CD14-positive monocyte (primary cell): ENCODE measurements at regions of chr7 and their contacts with region 1.

Region 1: DNA sequence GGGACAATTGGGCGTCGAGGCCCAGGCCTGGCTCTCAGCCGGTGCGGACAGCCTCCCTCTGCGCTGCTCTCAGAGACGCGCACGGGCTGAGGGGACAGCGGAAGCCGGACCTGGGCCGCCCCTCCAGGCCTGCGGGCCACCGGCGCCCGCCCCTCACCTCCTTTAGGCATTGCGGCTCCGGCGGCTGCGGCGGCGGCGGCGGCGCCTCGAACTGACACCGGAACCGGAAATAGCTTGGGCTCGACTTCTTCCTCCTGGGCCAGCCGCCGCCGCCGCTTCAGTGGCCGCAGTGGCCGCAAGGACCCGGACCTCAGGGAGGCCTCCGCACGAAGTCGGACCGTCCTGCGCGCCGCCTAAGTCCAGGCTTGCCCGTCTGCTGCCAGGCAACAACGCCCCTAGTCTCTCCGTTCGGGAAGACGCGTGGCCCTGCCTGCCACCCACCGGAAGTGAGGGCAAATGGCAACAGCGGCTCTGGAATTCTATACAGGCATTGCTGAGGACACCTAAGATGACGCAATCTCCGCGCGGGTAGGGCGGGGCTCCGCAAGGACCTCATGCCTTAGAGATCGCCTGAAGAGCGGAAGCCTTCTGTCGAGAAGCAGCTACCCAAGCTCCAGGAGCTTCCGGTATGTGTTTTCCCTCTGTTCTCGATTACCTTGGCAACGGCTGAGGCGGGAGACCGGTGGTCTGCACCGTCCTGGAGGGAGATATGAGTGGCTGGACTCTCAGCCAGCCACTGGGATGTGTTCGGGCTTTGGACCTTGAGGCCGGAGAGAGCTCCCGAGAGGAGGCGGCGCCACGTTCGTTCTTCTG is at the starts of genes BUD31 and PDAP1:
- DNase-seq: peak; percentile 93 to 96 (median 94)
- H3K4me3 ChIP-seq: peak within 1 kb of the TSS; percentile 65 to 96 (median 93)
- H3K4me3 Mint-ChIP-seq: peak within 1 kb of the TSS; percentile 97 to 99
- H3K27ac ChIP-seq: peak within 1 kb of the TSS; percentile 95 to 97
- H3K27ac Mint-ChIP-seq: peak within 1 kb of the TSS; percentile 97 to 99 (median 99)
- H3K4me1 ChIP-seq: peaks cover 25 to 35% of the 10 kb centered on the region in 2 donors
- H3K4me1 Mint-ChIP-seq: peaks cover 29% of the 10 kb centered on the region
- H3K27me3 ChIP-seq: no peaks in the 10 kb centered on the region
- H3K27me3 Mint-ChIP-seq: peaks cover 0 to 2% (median 2%) of the 10 kb centered on the region in 3 donors
- CTCF ChIP-seq: no peak
- polyA plus RNA-seq, gene BUD31: 34.3 to 256 (median 241) TPM
- polyA plus RNA-seq, gene PDAP1: 9.8 to 43.3 (median 16.2) TPM

Region 2: GRCh38 chr7:99374103-99375064 is 34.2 kb before region 1 on chr7 and contains the start of gene ARPC1B:
- intact Hi-C with region 1: loop called (anchors 2 kb)
- DNase-seq: peak; percentile 81 to 84 (median 82)
- H3K4me3 ChIP-seq: peak within 1 kb of the TSS; percentile 82 to 95 (median 89)
- H3K4me3 Mint-ChIP-seq: peak within 1 kb of the TSS; percentile 82 to 89
- H3K27ac ChIP-seq: peak within 1 kb of the TSS; percentile 94
- H3K27ac Mint-ChIP-seq: peak within 1 kb of the TSS; percentile 94 to 100 (median 99)
- H3K4me1 ChIP-seq: peaks cover 46 to 58% of the 10 kb centered on the region in 2 donors
- H3K4me1 Mint-ChIP-seq: peaks cover 50% of the 10 kb centered on the region
- H3K27me3 ChIP-seq: no peaks in the 10 kb centered on the region
- H3K27me3 Mint-ChIP-seq: peaks cover 0 to 2% (median 0%) of the 10 kb centered on the region in 3 donors
- CTCF ChIP-seq: no peak
- polyA plus RNA-seq, gene ARPC1B: 1,179 to 1,362 (median 1,282) TPM

Region 3: GRCh38 chr7:99472561-99473243 is 64.1 kb after region 1 on chr7 and contains the start of gene ZNF789:
- intact Hi-C with region 1: loop called in 1 of 2 experiments (anchors 2 kb)
- DNase-seq: peak; percentile 90 to 93 (median 92)
- H3K4me3 ChIP-seq: peak within 1 kb of the TSS; percentile 61 to 87 (median 76)
- H3K4me3 Mint-ChIP-seq: peak within 1 kb of the TSS; percentile 88 to 97
- H3K27ac ChIP-seq: peak within 1 kb of the TSS; percentile 74 to 80
- H3K27ac Mint-ChIP-seq: peak within 1 kb of the TSS; percentile 91 to 95 (median 93)
- H3K4me1 ChIP-seq: peaks cover 7 to 17% of the 10 kb centered on the region in 2 donors
- H3K4me1 Mint-ChIP-seq: peaks cover 14% of the 10 kb centered on the region
- H3K27me3 ChIP-seq: no peaks in the 10 kb centered on the region
- H3K27me3 Mint-ChIP-seq: peaks cover 15 to 24% (median 15%) of the 10 kb centered on the region in 3 donors
- CTCF ChIP-seq: no peak
- polyA plus RNA-seq, gene ZNF789: 1.8 to 10.4 (median 2.5) TPM

Region 4: DNA sequence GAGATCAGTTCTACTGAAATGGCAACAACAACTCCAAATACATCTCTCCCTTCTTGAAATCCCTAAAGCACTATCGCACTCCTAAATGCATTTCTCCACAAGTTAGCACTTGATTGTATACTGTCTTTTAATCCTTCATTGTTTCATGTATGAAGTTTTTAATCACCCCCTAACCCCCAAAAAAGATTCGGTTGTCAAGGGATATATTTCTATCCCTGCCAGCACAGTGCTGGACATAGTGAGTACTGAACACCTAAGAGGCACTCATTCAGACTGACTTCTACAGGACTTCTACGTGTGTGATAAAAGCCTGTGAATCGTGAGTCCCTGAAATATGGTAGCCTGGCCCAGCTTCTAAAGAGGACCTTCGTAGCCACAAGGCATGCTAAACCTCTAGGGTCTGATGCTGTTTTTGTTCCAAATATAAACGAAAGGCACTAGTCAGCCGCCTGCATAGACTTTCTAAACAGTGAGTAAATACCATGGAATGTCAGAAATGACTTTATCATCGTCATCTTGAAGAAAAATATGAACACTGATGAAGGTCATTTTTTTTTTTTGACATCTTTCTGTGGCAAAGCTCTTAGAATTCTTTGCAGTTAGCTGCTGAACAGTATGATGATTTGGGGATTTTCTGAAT is 626.4 kb after region 1 on chr7:
- intact Hi-C with region 1: no loop called
- DNase-seq: no peak
- H3K4me3 ChIP-seq: no peak overlapping the region
- H3K4me3 Mint-ChIP-seq: no peak overlapping the region
- H3K27ac ChIP-seq: no peak overlapping the region
- H3K27ac Mint-ChIP-seq: no peak overlapping the region
- H3K4me1 ChIP-seq: no peaks in the 10 kb centered on the region
- H3K4me1 Mint-ChIP-seq: no peaks in the 10 kb centered on the region
- H3K27me3 ChIP-seq: no peaks in the 10 kb centered on the region
- H3K27me3 Mint-ChIP-seq: peaks cover 0 to 2% (median 1%) of the 10 kb centered on the region in 3 donors
- CTCF ChIP-seq: no peak